Activated T-helper 2 cell treated with anti-CD3 and anti-CD28 coated beads, Interferon-gamma antibody, Interleukin-2, Interleukin-4, amounts not matched to agents 10 μg/mL and 5 μg/mL and 100 μg/mL, durations not matched to agents 14 hours and 24 hours and 36 hours (primary cell): ENCODE measurements at regions of chr11 and their contacts with region 1.

Region 1: DNA sequence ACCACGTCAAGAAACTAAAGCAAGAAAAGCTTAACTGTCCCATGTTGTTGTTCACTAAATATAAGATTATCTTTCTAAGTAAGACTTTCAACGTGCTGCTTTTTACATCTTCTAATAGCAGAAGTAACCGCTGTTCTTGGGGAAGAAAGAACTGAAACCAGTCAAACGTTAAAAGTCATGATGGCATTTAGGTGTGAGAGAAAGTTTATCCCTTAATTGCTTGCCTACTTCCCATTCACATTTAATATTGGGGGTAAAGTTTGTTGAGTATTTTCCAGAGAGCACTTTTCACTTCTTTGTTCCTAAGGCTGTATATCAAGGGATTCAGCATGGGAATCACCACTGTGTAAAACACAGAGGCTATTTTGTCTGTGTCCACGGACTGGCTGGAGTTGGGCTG is 970 bp downstream of the OR5B21 start:
- DNase-seq: no peak
- H3K4me3 Mint-ChIP-seq: no peak overlapping the region
- H3K27ac Mint-ChIP-seq: no peak overlapping the region
- H3K4me1 Mint-ChIP-seq: peaks cover 17% of the 10 kb centered on the region
- H3K27me3 Mint-ChIP-seq: no peaks in the 10 kb centered on the region

Region 2: DNA sequence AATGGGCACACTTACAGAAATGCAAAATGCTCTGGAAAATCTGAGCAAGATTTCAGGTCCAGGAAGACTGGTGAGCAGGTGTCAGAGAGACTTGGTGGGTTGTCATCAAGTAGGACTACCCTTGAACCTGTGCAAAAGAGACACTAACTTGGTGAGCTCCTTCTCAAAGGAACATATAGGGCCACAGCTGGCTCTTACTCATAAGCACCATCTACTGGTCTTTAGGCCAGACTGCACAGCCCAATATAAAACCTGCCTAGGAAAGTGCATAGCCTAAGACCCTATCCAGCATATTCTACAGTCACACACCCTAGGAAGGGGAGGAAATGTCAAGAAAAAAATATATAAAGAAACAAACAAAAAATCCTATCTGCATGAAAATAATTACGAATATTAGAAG is 220.7 kb before region 1 on chr11:
- intact Hi-C with region 1: no loop called
- DNase-seq: no peak
- H3K4me3 Mint-ChIP-seq: no peak overlapping the region
- H3K27ac Mint-ChIP-seq: no peak overlapping the region
- H3K4me1 Mint-ChIP-seq: no peaks in the 10 kb centered on the region
- H3K27me3 Mint-ChIP-seq: no peaks in the 10 kb centered on the region

Region 3: GRCh38 chr11:58394195-58394594 is 112.7 kb before region 1 on chr11:
- intact Hi-C with region 1: loop called (anchors 5 kb)
- DNase-seq: no peak
- H3K4me3 Mint-ChIP-seq: no peak overlapping the region
- H3K27ac Mint-ChIP-seq: no peak overlapping the region
- H3K4me1 Mint-ChIP-seq: peaks cover 2% of the 10 kb centered on the region
- H3K27me3 Mint-ChIP-seq: no peaks in the 10 kb centered on the region

Region 4: DNA sequence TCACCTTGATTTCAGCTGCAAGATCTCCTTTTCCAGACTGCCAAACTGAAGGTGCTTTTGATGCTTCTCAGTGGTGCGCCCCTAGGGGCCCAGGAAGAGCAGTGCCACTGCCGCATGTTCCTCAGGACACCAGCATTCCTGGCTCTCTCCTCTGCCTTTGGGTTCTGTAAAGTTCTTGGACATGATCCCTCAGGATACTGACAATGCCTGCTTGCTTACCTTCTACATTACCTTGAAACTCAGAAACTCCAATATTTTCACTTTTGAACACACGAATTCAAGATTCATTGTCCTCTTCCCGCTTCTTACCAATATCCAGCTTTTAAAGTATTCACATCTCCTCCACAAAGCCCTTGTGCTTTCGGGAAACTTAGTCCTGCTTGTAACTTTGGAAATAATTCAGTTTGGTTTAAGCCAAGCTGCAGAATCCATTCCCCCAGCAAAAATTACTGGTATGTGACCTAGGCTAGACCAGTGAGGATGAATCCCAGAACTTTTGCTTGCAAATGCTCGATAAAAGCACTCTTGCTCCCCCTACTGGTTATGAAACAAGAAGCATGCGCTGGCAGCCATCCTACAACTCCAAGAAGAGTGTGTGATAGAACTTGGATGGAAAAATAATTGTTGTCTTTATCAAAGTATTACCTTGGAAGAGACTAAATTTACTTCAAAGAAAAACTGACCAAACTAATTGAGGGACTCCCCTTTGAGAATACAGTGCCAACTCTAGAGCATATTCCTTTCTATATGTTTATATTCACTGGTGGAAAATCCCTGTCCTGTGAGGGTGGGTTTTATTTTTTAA is 17.5 kb after region 1 on chr11:
- intact Hi-C with region 1: loop called (anchors 1 kb)
- DNase-seq: peak; percentile 29
- H3K4me3 Mint-ChIP-seq: peak overlapping the region; percentile 75
- H3K27ac Mint-ChIP-seq: peak overlapping the region; percentile 88
- H3K4me1 Mint-ChIP-seq: peaks cover 48% of the 10 kb centered on the region
- H3K27me3 Mint-ChIP-seq: no peaks in the 10 kb centered on the region

Region 5: GRCh38 chr11:58726737-58727414 is 219.9 kb after region 1 on chr11:
- intact Hi-C with region 1: no loop called
- DNase-seq: no peak
- H3K4me3 Mint-ChIP-seq: no peak overlapping the region
- H3K27ac Mint-ChIP-seq: no peak overlapping the region
- H3K4me1 Mint-ChIP-seq: peaks cover 8% of the 10 kb centered on the region
- H3K27me3 Mint-ChIP-seq: no peaks in the 10 kb centered on the region